Gastrocnemius medialis (tissue), 4 donors: ENCODE measurements at regions of chr6 and their contacts with region 1.

Region 1: GRCh38 chr6:163711615-163712565 is 297.4 kb downstream of the QKI start:
- DNase-seq: peak; percentile 87 to 96
- ATAC-seq: peak; percentile 78
- H3K4me3 ChIP-seq: no peak overlapping the region
- H3K27ac ChIP-seq: peak overlapping the region; percentile 71 to 90 (median 75)
- H3K4me1 ChIP-seq: peaks cover 58 to 63% of the 10 kb centered on the region in 2 donors
- H3K27me3 ChIP-seq: no peaks in the 10 kb centered on the region
- CTCF ChIP-seq: peak; percentile 40 to 66 (median 47)
- POLR2A ChIP-seq: no peak

Region 2: DNA sequence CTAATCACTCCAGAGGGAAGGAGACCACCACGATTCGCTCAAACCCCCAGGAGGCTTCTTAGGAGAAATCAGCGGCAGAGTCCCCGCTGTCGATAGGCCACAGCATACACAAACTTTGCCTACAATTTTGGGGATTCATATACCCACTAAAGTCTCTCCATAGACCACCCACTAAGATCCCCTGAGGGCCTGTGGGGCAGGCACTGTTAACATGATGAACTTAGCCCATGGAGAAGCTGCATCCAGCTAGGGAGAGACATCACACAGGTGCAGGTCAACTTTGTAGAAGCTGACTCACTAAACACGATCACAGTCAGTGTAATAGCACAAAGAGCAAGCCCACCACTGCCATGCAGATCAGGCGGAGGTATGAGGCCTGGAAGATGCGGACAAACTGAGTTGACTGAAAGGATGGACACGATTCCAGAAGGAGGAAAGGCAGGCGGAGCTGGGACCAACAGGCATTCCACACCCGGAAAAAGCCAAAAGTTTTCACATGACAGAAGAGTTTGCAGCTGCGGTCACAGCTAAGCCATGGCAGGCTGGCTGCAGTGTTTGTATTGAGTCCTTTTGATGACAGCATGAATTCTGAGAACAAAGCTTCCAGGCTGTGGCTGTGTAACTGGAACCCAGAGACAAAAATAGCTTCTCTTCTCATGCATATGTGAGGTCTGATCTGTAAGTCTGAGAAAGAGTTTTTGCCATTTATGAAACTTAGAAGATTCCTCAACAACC is 373.1 kb before region 1 on chr6:
- in situ Hi-C with region 1: no loop called
- intact Hi-C with region 1: loop called (anchors 10 kb)
- DNase-seq: peak; percentile 73 to 84
- ATAC-seq: peak; percentile 82 to 83
- H3K4me3 ChIP-seq: peak overlapping the region in 3 of 4 donors; percentile 10 to 16 (median 15)
- H3K27ac ChIP-seq: peak overlapping the region; percentile 92 to 99 (median 94)
- H3K4me1 ChIP-seq: peaks cover 65 to 69% of the 10 kb centered on the region in 2 donors
- H3K27me3 ChIP-seq: no peaks in the 10 kb centered on the region
- CTCF ChIP-seq: no peak
- POLR2A ChIP-seq: no peak

Region 3: GRCh38 chr6:163438940-163439335 is 273.0 kb before region 1 on chr6:
- in situ Hi-C with region 1: loop called in 2 of 4 experiments (anchors 10 to 25 kb)
- intact Hi-C with region 1: no loop called
- DNase-seq: peak in 1 of 2 donors; percentile 32
- ATAC-seq: peak in 1 of 2 donors; percentile 21
- H3K4me3 ChIP-seq: no peak overlapping the region
- H3K27ac ChIP-seq: peak overlapping the region; percentile 3 to 98 (median 52)
- H3K4me1 ChIP-seq: peaks cover 86 to 91% of the 10 kb centered on the region in 2 donors
- H3K27me3 ChIP-seq: no peaks in the 10 kb centered on the region
- CTCF ChIP-seq: no peak
- POLR2A ChIP-seq: no peak

Region 4: GRCh38 chr6:163572612-163573011 is 139.3 kb before region 1 on chr6:
- in situ Hi-C with region 1: no loop called
- intact Hi-C with region 1: no loop called
- DNase-seq: no peak
- ATAC-seq: peak in 1 of 2 donors; percentile 45
- H3K4me3 ChIP-seq: no peak overlapping the region
- H3K27ac ChIP-seq: peak overlapping the region; percentile 35 to 86 (median 71)
- H3K4me1 ChIP-seq: peaks cover 14 to 45% of the 10 kb centered on the region in 2 donors
- H3K27me3 ChIP-seq: no peaks in the 10 kb centered on the region
- CTCF ChIP-seq: no peak
- POLR2A ChIP-seq: no peak

Region 5: GRCh38 chr6:163585932-163586437 is 125.9 kb before region 1 on chr6:
- in situ Hi-C with region 1: no loop called
- intact Hi-C with region 1: loop called (anchors 2 kb)
- DNase-seq: peak; percentile 87 to 93
- ATAC-seq: peak; percentile 85 to 88
- H3K4me3 ChIP-seq: peak overlapping the region in 3 of 4 donors; percentile 14 to 24 (median 24)
- H3K27ac ChIP-seq: peak overlapping the region; percentile 81 to 88 (median 86)
- H3K4me1 ChIP-seq: peaks cover 43 to 55% of the 10 kb centered on the region in 2 donors
- H3K27me3 ChIP-seq: no peaks in the 10 kb centered on the region
- CTCF ChIP-seq: no peak
- POLR2A ChIP-seq: peak; percentile 39 to 52

Region 6: DNA sequence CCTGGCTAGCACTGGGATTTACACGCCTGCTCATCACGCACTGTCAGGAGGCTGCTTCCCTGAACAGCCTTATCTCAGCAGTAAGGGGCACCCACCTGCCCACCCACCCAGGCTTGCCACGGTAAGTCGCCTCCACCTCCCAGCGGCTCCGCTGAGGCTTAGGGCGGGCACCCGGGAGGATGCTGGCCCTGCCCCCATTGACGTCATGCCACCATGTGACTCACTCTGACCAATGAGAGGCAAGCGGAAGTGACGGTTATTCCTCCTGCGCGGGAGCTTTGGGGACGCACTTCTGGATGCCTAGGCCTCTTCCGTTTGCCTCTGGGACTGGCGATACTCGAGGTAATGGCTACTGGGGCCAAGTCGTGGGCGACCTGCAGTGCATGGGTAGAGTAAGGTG is 40.5 kb before region 1 on chr6:
- in situ Hi-C with region 1: no loop called
- intact Hi-C with region 1: no loop called
- DNase-seq: no peak
- ATAC-seq: no peak
- H3K4me3 ChIP-seq: no peak overlapping the region
- H3K27ac ChIP-seq: no peak overlapping the region
- H3K4me1 ChIP-seq: peaks cover 4 to 8% of the 10 kb centered on the region in 2 donors
- H3K27me3 ChIP-seq: no peaks in the 10 kb centered on the region
- CTCF ChIP-seq: no peak
- POLR2A ChIP-seq: no peak

Region 7: DNA sequence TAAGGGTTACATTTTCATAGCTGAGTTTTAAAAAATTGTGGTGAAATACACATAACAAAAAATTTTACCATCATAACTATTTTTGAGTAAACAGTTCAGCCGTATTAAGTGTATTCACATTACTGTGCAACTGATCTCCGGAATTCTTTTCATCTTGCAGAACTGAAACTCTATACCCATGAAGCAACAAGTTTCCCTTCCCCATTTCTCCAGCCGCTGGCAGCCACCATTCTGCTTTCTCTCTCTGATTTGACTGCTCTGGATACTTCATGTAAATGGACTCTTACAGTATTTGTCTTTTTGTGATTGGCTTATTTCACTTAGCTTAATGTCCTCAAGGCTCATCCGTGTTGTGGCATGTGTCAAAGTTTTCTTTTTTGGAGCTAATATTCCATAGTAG is 44.2 kb after region 1 on chr6:
- in situ Hi-C with region 1: no loop called
- intact Hi-C with region 1: no loop called
- DNase-seq: peak; percentile 50 to 58
- ATAC-seq: peak; percentile 98 to 99
- H3K4me3 ChIP-seq: no peak overlapping the region
- H3K27ac ChIP-seq: peak overlapping the region; percentile 51 to 55 (median 52)
- H3K4me1 ChIP-seq: peaks cover 12 to 14% of the 10 kb centered on the region in 2 donors
- H3K27me3 ChIP-seq: no peaks in the 10 kb centered on the region
- CTCF ChIP-seq: no peak
- POLR2A ChIP-seq: no peak

Region 8: GRCh38 chr6:163814494-163815364 is 102.8 kb after region 1 on chr6:
- in situ Hi-C with region 1: no loop called
- intact Hi-C with region 1: loop called (anchors 2 kb)
- DNase-seq: peak; percentile 22 to 48
- ATAC-seq: peak; percentile 97 to 99
- H3K4me3 ChIP-seq: no peak overlapping the region
- H3K27ac ChIP-seq: peak overlapping the region; percentile 76 to 87 (median 84)
- H3K4me1 ChIP-seq: peaks cover 19 to 20% of the 10 kb centered on the region in 2 donors
- H3K27me3 ChIP-seq: no peaks in the 10 kb centered on the region
- CTCF ChIP-seq: peak; percentile 40 to 55 (median 48)
- POLR2A ChIP-seq: no peak